Left cardiac atrium (tissue), 4 donors: ENCODE measurements at regions of chr1 and their contacts with region 1.

Region 1: GRCh38 chr1:98468111-98468717 is 193.3 kb upstream of the SNX7 start:
- DNase-seq: no peak
- ATAC-seq: no peak

Region 2: DNA sequence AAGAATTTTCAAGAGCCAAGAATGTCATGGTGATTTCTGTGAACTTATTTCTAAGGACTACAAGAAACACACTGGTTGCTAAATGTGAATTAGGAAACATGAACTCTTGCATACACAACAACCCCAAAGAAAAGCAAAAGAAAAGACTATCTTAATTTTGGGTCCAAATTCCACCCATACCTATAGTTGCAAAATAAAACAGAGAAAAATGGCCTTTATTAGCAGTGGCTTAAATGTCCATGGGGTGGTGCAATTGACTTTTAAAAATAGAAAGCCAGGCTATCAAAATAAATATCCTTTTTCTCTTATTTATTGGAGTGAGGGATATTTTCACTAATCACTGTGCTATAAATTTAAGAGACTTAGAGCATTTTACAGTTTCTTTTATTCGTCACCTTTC is 466.4 kb before region 1 on chr1:
- intact Hi-C with region 1: loop called in 1 of 2 experiments (anchors 10 kb)
- DNase-seq: no peak
- ATAC-seq: no peak

Region 3: DNA sequence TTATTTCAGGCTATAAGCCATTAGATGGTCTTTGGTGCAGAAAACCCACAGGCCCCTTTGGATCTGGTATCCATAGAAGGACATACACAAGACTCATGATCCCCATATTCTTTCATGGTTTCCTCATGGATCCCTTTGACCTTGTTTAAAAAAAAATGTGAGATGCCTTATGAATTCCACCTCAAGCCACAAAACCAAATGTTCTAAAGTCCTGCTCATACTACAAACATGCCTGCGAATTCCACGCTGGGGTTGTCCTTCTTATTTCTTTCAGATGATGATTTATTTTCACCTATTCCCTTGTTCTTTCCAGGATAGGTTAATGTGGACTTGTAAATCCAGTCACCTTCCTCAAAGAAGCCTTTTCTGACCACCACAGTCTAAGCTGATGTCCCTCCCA is 290.5 kb before region 1 on chr1:
- intact Hi-C with region 1: no loop called
- DNase-seq: no peak
- ATAC-seq: no peak

Region 4: DNA sequence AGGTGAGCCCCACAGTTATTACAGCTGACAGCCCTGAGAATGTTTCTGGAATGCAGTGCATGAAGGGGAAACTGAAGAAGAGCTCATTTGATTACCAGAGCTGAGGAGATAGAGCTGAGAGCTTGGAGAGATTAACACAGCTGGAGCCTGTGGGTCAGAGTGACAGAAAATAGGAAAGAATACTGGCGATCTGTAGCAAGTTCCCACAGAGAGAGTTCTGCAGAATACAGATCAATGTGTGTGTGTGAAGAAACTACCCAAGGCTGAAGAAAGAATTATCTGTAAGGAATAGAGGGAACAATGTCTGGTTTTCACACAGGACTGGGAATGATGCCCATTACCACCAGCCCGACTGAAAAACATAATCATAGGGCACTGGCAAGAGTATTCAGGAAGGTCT is 89.7 kb after region 1 on chr1:
- intact Hi-C with region 1: no loop called
- DNase-seq: no peak
- ATAC-seq: no peak